ENCODE measurements at regions of chr12 and their contacts with region 1.

Region 1: DNA sequence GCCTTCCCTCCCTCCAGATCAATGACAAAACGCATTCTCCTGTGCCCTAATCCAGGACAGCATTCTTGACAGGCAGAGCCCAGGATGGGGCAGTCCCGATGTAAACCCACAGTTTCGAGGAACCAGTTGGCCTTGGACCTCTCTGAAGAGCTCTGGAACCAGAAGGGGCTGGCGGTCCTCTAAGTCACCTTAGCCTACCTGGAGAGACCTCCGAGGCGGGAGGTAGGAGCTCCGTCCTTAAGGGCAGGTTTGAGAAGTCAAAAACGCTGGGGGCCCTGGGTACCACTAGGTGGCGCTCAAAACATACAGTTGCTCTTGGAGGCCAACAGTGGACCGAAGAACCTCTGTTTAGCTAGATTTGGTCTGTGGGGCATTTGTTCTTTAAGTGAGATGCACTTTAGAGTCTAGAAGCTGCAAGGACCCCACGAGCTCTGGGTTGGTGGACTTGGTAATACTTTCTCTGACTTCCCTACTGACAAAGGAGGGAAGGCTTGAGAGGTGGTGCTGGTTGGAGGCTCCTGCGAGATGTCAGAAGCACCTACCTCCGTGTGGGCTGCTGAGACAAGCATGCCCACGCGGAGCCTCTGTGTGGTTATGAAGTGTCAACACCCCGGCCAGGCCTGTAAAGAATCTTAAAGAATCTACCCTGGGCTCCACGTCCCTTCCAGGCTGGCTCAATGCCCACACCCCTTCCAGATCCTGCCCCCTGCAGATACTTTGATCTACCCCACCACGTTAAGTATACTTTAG is 74.8 kb upstream of the CHST11 start:
- DNase-seq: peak; percentile 87
- H3K4me3 Mint-ChIP-seq: no peak overlapping the region
- H3K27ac Mint-ChIP-seq: no peak overlapping the region
- H3K4me1 Mint-ChIP-seq: peaks cover 10% of the 10 kb centered on the region
- H3K27me3 Mint-ChIP-seq: peaks cover 11% of the 10 kb centered on the region
- CTCF ChIP-seq: peak; percentile 92

Region 2: GRCh38 chr12:103947871-103948555 is 433.9 kb before region 1 on chr12:
- CTCF ChIA-PET with region 1: no interaction called
- POLR2A ChIA-PET with region 1: no interaction called
- intact Hi-C with region 1: no loop called
- DNase-seq: no peak
- H3K4me3 Mint-ChIP-seq: no peak overlapping the region
- H3K27ac Mint-ChIP-seq: peak overlapping the region; percentile 64
- H3K4me1 Mint-ChIP-seq: peaks cover 6% of the 10 kb centered on the region
- H3K27me3 Mint-ChIP-seq: no peaks in the 10 kb centered on the region
- CTCF ChIP-seq: no peak

Region 3: GRCh38 chr12:104201238-104202001 is 180.5 kb before region 1 on chr12:
- CTCF ChIA-PET with region 1: interaction called, 18 read pairs
- POLR2A ChIA-PET with region 1: no interaction called
- intact Hi-C with region 1: loop called (anchors 1 kb)
- DNase-seq: peak; percentile 74
- H3K4me3 Mint-ChIP-seq: no peak overlapping the region
- H3K27ac Mint-ChIP-seq: no peak overlapping the region
- H3K4me1 Mint-ChIP-seq: peaks cover 18% of the 10 kb centered on the region
- H3K27me3 Mint-ChIP-seq: no peaks in the 10 kb centered on the region
- CTCF ChIP-seq: peak; percentile 86

Region 4: GRCh38 chr12:104456417-104456949 is 74.6 kb after region 1 on chr12 and contains the start of gene CHST11:
- CTCF ChIA-PET with region 1: interaction called, 9 read pairs
- POLR2A ChIA-PET with region 1: interaction called, 3 read pairs
- intact Hi-C with region 1: loop called (anchors 2 kb)
- DNase-seq: peak; percentile 69
- H3K4me3 Mint-ChIP-seq: peak within 1 kb of the TSS; percentile 83
- H3K27ac Mint-ChIP-seq: peak within 1 kb of the TSS; percentile 88
- H3K4me1 Mint-ChIP-seq: peaks cover 24% of the 10 kb centered on the region
- H3K27me3 Mint-ChIP-seq: no peaks in the 10 kb centered on the region
- CTCF ChIP-seq: no peak
- total RNA-seq, gene CHST11: 4.8 and 5.3 TPM in 2 replicates

Region 5: DNA sequence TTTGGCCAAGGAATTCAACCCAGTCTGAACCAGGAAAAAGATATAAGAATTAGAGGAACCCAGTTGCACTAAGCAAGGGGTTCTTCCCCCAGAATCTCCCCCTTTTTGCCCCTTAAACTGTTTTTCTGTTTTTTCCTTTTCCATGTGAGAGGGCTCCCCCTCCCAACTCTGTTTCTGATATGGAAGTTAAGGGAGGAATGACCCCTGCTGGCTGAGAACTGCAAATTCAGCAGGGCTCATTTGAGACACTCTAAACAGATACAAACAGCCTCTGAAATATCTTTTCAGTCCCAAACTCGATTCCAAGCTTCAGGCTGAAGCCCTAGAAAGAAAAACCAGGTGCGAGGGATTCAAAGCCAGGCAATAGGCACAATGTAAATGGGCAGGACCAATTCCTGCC is 443.5 kb after region 1 on chr12:
- CTCF ChIA-PET with region 1: no interaction called
- POLR2A ChIA-PET with region 1: no interaction called
- intact Hi-C with region 1: loop called (anchors 1 kb)
- DNase-seq: peak; percentile 34
- H3K4me3 Mint-ChIP-seq: no peak overlapping the region
- H3K27ac Mint-ChIP-seq: no peak overlapping the region
- H3K4me1 Mint-ChIP-seq: no peaks in the 10 kb centered on the region
- H3K27me3 Mint-ChIP-seq: no peaks in the 10 kb centered on the region
- CTCF ChIP-seq: no peak

Region 6: DNA sequence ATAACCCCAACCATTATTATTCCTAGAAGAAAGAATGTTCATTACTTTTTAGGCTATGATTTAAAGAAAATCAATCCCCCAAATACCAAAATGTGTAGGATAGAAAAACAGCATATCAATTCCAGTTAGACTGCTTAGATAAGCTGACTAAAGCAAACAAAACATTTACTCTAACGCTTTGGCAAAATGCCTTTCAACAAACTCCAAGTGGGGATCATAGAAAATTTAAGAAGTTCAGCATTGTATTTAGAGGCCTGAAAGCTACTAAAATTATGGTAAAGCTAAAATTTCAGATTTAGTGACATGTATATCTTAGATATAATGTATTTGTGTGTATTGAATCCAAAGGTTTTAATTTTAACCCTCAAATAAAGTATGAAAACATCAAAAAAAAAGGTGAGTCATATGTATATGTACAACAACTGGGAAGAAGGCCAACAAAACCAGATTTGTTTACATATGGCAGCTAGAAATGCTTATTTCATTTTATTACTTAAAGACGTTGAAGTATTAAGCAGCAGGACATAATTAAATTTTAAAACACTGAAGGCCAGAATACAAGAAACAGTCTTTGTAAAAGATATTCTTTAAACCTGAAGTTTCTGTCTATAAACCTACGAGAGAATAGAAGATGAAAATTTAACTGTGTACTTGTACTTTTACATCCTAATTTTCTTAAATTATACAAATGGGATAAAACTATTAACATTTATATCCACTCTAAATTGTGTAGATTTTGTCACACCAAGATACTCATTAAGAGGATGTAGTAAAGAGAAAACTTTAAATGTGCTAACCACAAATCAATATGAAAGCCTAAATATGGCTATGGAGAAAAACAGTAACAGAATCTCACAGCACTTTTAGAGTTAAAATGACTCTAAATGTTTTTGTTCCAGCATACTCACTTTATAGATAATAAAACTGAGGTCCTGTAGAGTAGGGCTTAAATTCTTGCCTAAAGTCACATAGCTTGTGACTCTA is 504.8 kb after region 1 on chr12:
- CTCF ChIA-PET with region 1: interaction called, 13 read pairs
- POLR2A ChIA-PET with region 1: no interaction called
- intact Hi-C with region 1: no loop called
- DNase-seq: peak; percentile 81
- H3K4me3 Mint-ChIP-seq: no peak overlapping the region
- H3K27ac Mint-ChIP-seq: peak overlapping the region; percentile 54
- H3K4me1 Mint-ChIP-seq: no peaks in the 10 kb centered on the region
- H3K27me3 Mint-ChIP-seq: no peaks in the 10 kb centered on the region
- CTCF ChIP-seq: no peak

Region 7: GRCh38 chr12:105053116-105053572 is 671.2 kb after region 1 on chr12:
- CTCF ChIA-PET with region 1: interaction called, 69 read pairs
- POLR2A ChIA-PET with region 1: interaction called, 8 read pairs
- intact Hi-C with region 1: loop called (anchors 1 kb)
- DNase-seq: peak; percentile 82
- H3K4me3 Mint-ChIP-seq: no peak overlapping the region
- H3K27ac Mint-ChIP-seq: peak overlapping the region; percentile 19
- H3K4me1 Mint-ChIP-seq: peaks cover 5% of the 10 kb centered on the region
- H3K27me3 Mint-ChIP-seq: no peaks in the 10 kb centered on the region
- CTCF ChIP-seq: peak; percentile 77